PC-3 (cell line): ENCODE measurements at regions of chr1 and their contacts with region 1.

Region 1: GRCh38 chr1:33295450-33296081 is 25.3 kb downstream of the A3GALT2 start:
- DNase-seq: peak; percentile 93
- ATAC-seq: peak; percentile 87
- H3K4me3 ChIP-seq: no peak overlapping the region
- H3K27ac ChIP-seq: no peak overlapping the region
- H3K4me1 ChIP-seq: no peaks in the 10 kb centered on the region
- H3K27me3 ChIP-seq: no peaks in the 10 kb centered on the region
- CTCF ChIP-seq: peak; percentile 98

Region 2: GRCh38 chr1:33111970-33112369 is 183.6 kb before region 1 on chr1:
- CTCF ChIA-PET with region 1: no interaction called
- POLR2A ChIA-PET with region 1: no interaction called
- intact Hi-C with region 1: loop called (anchors 2 kb)
- DNase-seq: peak; percentile 54
- ATAC-seq: peak; percentile 85
- H3K4me3 ChIP-seq: no peak overlapping the region
- H3K27ac ChIP-seq: no peak overlapping the region
- H3K4me1 ChIP-seq: no peaks in the 10 kb centered on the region
- H3K27me3 ChIP-seq: no peaks in the 10 kb centered on the region
- CTCF ChIP-seq: peak; percentile 80

Region 3: DNA sequence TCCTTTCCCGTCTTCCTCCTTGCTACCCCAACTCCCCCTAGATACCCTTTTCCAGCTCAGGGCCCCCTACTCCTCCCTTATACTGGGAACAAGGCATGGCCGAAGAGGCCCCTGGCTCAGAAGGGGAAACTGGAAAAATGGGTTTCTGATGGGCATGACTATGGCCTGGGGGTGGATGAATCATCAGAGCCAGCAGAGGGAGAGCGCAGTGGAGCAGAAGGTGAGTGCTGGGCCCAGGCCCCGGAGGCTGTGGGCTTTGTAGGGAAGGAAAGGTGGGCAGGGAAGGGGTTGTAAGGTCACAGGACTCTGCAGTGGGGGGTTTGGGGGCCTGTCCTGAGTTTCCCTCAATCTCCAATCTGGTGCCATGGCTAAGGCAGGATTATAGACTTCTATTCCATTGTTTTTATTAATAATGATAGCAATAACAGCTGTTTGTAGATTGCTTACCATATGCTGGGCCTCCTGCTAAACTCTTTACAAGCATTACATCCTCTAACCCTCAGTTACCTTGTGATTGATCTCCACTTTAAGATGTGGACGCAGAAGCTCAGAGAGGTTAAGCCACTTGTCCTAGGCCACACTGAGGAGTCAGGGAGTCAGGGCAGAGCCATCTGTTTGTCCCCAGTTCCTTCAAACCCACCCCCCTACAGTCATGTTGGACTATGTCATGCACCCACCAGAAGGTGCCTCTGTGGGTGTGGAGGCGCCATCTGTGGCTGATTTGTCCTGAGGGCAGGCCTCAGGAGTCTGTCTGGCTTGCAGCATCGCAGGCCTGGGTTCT is 75.5 kb before region 1 on chr1:
- CTCF ChIA-PET with region 1: interaction called, 7 read pairs
- POLR2A ChIA-PET with region 1: interaction called, 5 read pairs
- intact Hi-C with region 1: loop called (anchors 1 kb)
- DNase-seq: peak; percentile 94
- ATAC-seq: peak; percentile 85
- H3K4me3 ChIP-seq: no peak overlapping the region
- H3K27ac ChIP-seq: peak overlapping the region; percentile 67
- H3K4me1 ChIP-seq: peaks cover 34% of the 10 kb centered on the region
- H3K27me3 ChIP-seq: no peaks in the 10 kb centered on the region
- CTCF ChIP-seq: no peak

Region 4: DNA sequence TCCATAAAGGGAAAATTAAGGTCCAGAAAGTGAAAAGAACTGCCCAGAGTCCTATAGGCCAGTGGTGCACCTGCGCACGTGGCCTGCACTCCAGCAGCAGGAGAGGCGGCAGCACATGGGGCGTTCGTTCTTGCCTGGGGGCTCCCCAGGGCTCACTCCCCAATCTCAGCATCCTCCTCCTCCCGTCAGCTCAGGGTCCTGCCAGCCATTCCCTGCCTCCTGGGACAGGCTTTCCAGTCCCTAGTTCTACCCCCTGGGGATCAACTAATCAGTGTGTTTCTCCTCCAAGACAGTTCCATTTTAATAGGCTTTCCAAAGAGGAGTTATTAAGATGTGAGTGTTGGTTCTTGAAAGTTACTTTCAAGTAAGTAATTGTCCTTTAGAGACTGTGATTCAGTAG is 26.5 kb after region 1 on chr1:
- CTCF ChIA-PET with region 1: no interaction called
- POLR2A ChIA-PET with region 1: no interaction called
- intact Hi-C with region 1: no loop called
- DNase-seq: no peak
- ATAC-seq: no peak; the same call in 1 of the 2 replicates
- H3K4me3 ChIP-seq: no peak overlapping the region
- H3K27ac ChIP-seq: no peak overlapping the region
- H3K4me1 ChIP-seq: peaks cover 10% of the 10 kb centered on the region
- H3K27me3 ChIP-seq: no peaks in the 10 kb centered on the region
- CTCF ChIP-seq: no peak

Region 5: GRCh38 chr1:33335020-33335419 is 39.5 kb after region 1 on chr1:
- CTCF ChIA-PET with region 1: interaction called, 18 read pairs
- POLR2A ChIA-PET with region 1: no interaction called
- intact Hi-C with region 1: no loop called
- DNase-seq: no peak
- ATAC-seq: no peak
- H3K4me3 ChIP-seq: no peak overlapping the region
- H3K27ac ChIP-seq: no peak overlapping the region
- H3K4me1 ChIP-seq: peaks cover 24% of the 10 kb centered on the region; the same call in 1 of the 2 replicates
- H3K27me3 ChIP-seq: no peaks in the 10 kb centered on the region
- CTCF ChIP-seq: no peak

Region 6: DNA sequence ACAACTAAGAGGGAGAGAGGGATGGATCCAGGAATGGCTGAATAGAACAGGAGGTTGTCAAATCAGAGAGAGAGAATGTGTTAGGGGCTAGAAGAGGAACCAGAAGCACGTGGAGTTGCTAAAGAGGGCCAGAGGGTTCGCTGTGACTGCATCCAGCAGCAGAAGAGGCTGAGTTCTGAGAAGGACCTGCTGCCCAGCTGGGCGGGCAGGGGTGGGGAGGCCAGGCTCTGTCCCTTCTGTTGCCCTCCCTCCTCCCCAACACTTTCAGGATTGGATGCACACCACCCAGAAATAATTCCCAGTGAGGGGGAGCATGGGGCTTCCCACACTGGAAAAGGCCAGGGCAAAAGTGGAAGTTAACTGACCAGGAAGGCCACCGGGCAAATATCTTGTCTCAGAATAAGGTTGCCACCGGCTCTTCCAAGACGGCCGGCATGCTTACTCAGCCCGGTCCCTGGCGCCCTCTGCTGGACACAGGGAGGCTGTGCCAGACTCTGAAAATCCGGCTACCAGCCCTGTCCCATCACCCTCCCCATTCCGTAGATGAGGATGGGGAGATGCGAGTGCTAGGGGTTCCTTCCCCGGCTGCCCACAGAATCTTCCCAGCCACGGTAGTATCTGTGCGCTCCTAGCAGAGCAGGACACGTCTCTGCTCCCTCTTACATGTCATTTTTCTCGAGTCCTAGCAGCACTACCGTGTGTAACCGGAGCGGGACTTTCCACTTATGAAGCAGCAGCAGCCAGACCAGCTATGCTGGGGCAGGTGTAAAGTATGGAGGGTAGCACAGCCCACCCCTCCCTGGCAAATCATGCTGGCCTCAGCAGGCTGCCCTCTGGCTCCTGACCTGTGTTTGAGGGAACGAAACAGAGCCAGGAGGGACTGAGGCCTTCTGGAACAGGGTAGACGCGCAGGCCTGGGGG is 72.2 kb after region 1 on chr1:
- CTCF ChIA-PET with region 1: interaction called, 3 read pairs
- POLR2A ChIA-PET with region 1: no interaction called
- intact Hi-C with region 1: loop called (anchors 1 kb)
- DNase-seq: peak; percentile 81
- ATAC-seq: peak; percentile 86
- H3K4me3 ChIP-seq: no peak overlapping the region
- H3K27ac ChIP-seq: no peak overlapping the region
- H3K4me1 ChIP-seq: no peaks in the 10 kb centered on the region
- H3K27me3 ChIP-seq: no peaks in the 10 kb centered on the region
- CTCF ChIP-seq: peak; percentile 92

Region 7: DNA sequence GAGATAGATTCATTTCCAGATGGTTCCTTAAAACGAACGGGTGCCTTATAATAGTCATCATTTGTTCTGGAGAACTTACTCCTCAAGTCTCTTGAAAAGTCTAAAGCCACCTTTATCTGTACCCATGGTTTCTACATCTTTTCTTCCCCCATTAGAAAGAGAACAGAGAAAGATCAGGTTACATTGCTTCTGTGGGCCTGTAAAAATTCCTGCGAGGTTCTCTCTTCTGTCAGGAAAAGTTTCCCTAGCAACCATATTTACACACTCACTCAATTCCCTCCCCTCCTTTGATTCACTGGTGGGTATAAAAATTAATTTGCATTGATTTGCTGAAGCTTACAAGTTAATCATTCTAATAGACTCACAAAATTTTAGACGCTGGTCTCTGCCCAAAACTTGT is 128.6 kb after region 1 on chr1:
- CTCF ChIA-PET with region 1: no interaction called
- POLR2A ChIA-PET with region 1: no interaction called
- intact Hi-C with region 1: no loop called
- DNase-seq: peak; percentile 82
- ATAC-seq: peak; percentile 37
- H3K4me3 ChIP-seq: no peak overlapping the region; the same call in 1 of the 2 replicates
- H3K27ac ChIP-seq: peak overlapping the region; percentile 93
- H3K4me1 ChIP-seq: peaks cover 88% of the 10 kb centered on the region
- H3K27me3 ChIP-seq: no peaks in the 10 kb centered on the region
- CTCF ChIP-seq: no peak

Region 8: GRCh38 chr1:33472349-33472980 is 176.9 kb after region 1 on chr1 and contains the start of gene ZSCAN20:
- CTCF ChIA-PET with region 1: interaction called, 9 read pairs
- POLR2A ChIA-PET with region 1: no interaction called
- intact Hi-C with region 1: loop called (anchors 1 kb)
- DNase-seq: peak; percentile 80
- ATAC-seq: peak; percentile 70
- H3K4me3 ChIP-seq: peak within 1 kb of the TSS; percentile 67
- H3K27ac ChIP-seq: no peak within 1 kb of the TSS
- H3K4me1 ChIP-seq: no peaks in the 10 kb centered on the region
- H3K27me3 ChIP-seq: peaks cover 7% of the 10 kb centered on the region; the same call in 1 of the 2 replicates
- CTCF ChIP-seq: no peak
- total RNA-seq, gene ZSCAN20: 0.84 and 1.6 TPM in 2 replicates